Activated B cell treated with CpG ODN at 0.5 μM for 24 hours (primary cell): ENCODE measurements at regions of chr15 and their contacts with region 1.

Region 1: DNA sequence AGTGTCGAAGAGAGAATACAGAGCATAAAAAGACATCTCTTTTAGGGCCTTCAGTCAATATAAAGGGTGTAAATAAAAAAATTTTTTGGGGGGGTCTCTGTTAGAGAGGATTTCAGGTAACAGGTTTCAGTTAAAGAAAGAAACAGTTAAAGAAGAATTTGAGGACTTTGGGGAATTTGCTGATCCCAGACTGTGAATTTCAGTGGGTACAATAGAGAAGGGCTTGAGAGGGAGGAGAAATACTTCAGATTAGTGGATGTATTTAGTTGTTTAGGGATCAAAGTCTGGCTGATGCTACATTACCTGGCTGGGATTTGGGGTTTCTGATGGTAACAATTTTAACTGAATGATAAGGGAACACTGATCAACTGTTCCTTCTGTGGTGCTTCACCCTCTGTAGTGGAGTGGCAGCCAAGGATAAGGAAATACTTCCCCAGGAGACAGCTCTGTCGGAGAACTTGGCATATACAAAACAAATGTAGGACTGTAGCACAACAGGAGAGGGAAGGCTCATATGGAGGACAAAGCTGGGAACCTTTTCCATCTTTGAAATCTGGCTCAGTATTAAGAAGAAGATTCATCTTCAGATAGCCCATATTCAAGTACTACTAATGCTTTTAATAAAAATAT is 79.2 kb downstream of the MEF2A start:
- DNase-seq: no peak
- ATAC-seq: no peak
- H3K4me3 Mint-ChIP-seq: no peak overlapping the region
- H3K27ac Mint-ChIP-seq: no peak overlapping the region
- H3K4me1 Mint-ChIP-seq: peaks cover 6% of the 10 kb centered on the region
- H3K27me3 Mint-ChIP-seq: no peaks in the 10 kb centered on the region
- CTCF ChIP-seq: no peak

Region 2: DNA sequence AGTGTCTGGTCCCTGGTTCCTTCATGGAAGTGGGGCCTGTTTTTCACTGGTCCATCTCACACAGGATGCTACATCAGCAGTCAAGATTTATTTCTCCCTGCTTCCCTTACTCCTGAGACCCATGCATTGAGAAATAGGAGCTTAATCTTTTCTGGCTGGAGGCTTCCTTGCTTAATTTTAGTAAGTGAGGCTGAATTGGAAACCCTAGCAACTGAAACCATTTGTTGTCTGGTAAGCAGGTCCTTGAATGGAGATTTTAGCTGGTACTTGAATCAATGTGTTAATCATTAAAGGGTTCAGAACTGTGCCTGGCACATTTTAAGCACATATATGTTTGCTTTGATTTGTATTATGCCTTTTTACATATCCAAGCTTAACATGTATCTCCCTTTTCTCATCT is 99.4 kb before region 1 on chr15:
- CTCF ChIA-PET with region 1: no interaction called
- POLR2A ChIA-PET with region 1: no interaction called
- intact Hi-C with region 1: no loop called
- DNase-seq: no peak
- ATAC-seq: no peak
- H3K4me3 Mint-ChIP-seq: no peak overlapping the region
- H3K27ac Mint-ChIP-seq: no peak overlapping the region
- H3K4me1 Mint-ChIP-seq: peaks cover 3% of the 10 kb centered on the region
- H3K27me3 Mint-ChIP-seq: no peaks in the 10 kb centered on the region
- CTCF ChIP-seq: no peak

Region 3: GRCh38 chr15:99662903-99663302 is 17.9 kb after region 1 on chr15:
- CTCF ChIA-PET with region 1: no interaction called
- POLR2A ChIA-PET with region 1: no interaction called
- intact Hi-C with region 1: loop called (anchors 2 kb)
- DNase-seq: no peak
- ATAC-seq: no peak
- H3K4me3 Mint-ChIP-seq: no peak overlapping the region
- H3K27ac Mint-ChIP-seq: no peak overlapping the region
- H3K4me1 Mint-ChIP-seq: peaks cover 12% of the 10 kb centered on the region
- H3K27me3 Mint-ChIP-seq: no peaks in the 10 kb centered on the region
- CTCF ChIP-seq: no peak

Region 4: GRCh38 chr15:99682455-99682854 is 37.4 kb after region 1 on chr15:
- CTCF ChIA-PET with region 1: no interaction called
- POLR2A ChIA-PET with region 1: no interaction called
- intact Hi-C with region 1: loop called (anchors 5 kb)
- DNase-seq: no peak
- ATAC-seq: no peak
- H3K4me3 Mint-ChIP-seq: no peak overlapping the region
- H3K27ac Mint-ChIP-seq: peak overlapping the region; percentile 70
- H3K4me1 Mint-ChIP-seq: peaks cover 45% of the 10 kb centered on the region
- H3K27me3 Mint-ChIP-seq: no peaks in the 10 kb centered on the region
- CTCF ChIP-seq: no peak